ENCODE measurements at regions of chr4 and their contacts with region 1.

Region 1: DNA sequence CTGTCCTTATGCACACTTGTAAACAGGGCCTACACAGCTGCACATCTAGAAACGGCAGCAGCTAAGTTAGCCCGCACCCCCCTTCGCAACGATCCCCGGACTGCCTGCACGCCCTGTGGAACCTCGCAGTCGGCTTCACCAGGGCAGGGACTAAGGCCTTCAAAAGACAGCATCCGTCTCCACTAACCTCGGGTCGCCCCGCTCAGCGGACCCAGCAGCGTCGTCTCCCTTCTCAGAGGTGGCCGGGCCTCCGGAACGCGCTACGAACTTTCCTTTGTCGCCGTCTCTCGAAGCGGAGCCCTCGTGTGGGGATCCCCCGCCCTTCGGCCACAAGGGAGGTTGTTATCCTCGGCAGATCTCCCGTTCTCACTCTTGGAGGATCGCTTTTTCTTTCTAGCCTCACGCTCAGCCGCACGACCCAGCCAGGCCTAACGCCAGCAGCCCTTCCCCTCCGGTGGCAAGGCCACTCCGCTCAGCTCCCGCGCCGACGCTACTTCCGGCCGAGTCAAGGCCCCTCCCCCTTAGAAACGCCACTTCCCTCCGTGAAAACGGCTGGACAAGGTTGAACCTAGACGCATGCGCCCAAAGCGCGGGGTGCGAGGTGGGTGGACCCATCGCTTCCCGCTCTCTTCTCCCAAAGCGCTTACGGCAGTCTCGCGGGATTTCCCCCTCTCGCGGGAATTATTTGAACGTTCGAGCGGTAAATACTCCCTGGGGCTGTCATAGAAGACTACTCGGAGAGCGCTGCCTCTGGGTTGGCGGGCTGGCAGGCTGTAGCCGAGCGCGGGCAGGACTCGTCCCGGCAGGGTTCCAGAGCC is at the starts of genes DCAF16 and NCAPG:
- DNase-seq: peak; percentile 100
- ATAC-seq: peak; percentile 100
- H3K4me3 ChIP-seq: peak within 1 kb of the TSS; percentile 69 to 75
- H3K27ac ChIP-seq: peak within 1 kb of the TSS; percentile 36 to 83
- H3K4me1 ChIP-seq: no peaks in the 10 kb centered on the region
- H3K27me3 ChIP-seq: no peaks in the 10 kb centered on the region
- total RNA-seq, gene DCAF16: 29.2 to 34.5 TPM
- total RNA-seq, gene NCAPG: 0.78 to 1.8 TPM

Region 2: GRCh38 chr4:17544205-17544604 is 266.3 kb before region 1 on chr4:
- intact Hi-C with region 1: loop called in 1 of 2 experiments (anchors 5 kb)
- DNase-seq: no peak
- ATAC-seq: no peak
- H3K4me3 ChIP-seq: no peak overlapping the region
- H3K27ac ChIP-seq: no peak overlapping the region
- H3K4me1 ChIP-seq: no peaks in the 10 kb centered on the region
- H3K27me3 ChIP-seq: peaks cover 0 to 1% of the 10 kb centered on the region in 2 donors

Region 3: GRCh38 chr4:17614416-17615299 is 195.8 kb before region 1 on chr4 and contains the start of gene MED28:
- intact Hi-C with region 1: loop called in 1 of 2 experiments (anchors 1 kb)
- DNase-seq: peak; percentile 98 to 99
- ATAC-seq: peak; percentile 98
- H3K4me3 ChIP-seq: peak within 1 kb of the TSS; percentile 96 to 99
- H3K27ac ChIP-seq: peak within 1 kb of the TSS in 1 of 2 donors; percentile 66
- H3K4me1 ChIP-seq: peaks cover 0 to 5% of the 10 kb centered on the region in 2 donors
- H3K27me3 ChIP-seq: no peaks in the 10 kb centered on the region
- total RNA-seq, gene MED28: 40.9 to 52.7 TPM

Region 4: DNA sequence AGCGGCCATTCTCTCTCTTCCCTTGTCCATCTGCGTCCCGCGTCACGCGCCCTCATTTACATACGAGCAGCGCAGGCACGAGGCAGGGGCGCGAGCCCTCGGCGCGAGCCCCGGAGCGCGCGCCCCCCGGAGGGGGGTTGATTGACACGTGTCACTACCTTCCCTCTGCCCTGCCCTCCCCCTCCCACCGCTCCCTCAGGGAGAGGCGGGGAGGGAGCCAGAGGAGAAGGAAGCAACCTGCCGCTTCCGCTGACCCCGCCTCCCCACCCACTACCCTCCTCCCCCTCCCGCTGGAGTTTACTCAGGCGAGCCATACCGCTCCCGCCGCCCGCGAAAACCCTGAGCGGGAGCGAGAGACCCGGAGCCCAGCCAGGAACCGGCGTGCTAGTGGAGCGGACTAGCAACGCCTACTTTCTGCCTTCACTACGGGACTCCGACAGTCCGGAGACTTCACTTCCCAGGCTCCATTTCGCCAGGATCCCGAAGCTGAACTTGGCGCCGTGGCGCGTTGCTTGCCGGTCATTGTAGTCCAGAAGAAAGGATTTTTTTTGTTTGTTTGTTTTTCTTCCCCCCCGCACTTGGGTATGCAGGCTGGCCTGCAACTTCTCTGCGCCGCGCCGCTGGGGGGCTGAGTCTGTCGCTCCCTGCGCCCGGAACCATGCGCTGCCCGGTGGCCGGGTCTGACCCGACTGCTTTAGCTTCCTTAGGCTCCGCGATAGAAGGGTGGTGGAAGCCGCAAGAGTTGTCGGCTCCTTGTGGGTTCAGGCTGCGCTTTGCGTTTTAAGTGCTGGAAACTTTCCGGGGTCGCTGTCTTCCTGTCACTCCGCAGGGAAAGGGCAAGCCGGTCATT is 211.5 kb after region 1 on chr4 and contains the start of gene LCORL:
- intact Hi-C with region 1: loop called (anchors 2 kb)
- DNase-seq: peak; percentile 95 to 96
- ATAC-seq: peak; percentile 96
- H3K4me3 ChIP-seq: peak within 1 kb of the TSS; percentile 81 to 90
- H3K27ac ChIP-seq: peak within 1 kb of the TSS; percentile 31 to 38
- H3K4me1 ChIP-seq: no peaks in the 10 kb centered on the region
- H3K27me3 ChIP-seq: no peaks in the 10 kb centered on the region
- total RNA-seq, gene LCORL: 7.9 to 14.7 TPM